CD8-positive, alpha-beta memory T cell (primary cell): ENCODE measurements at regions of chr6 and their contacts with region 1.

Region 1: DNA sequence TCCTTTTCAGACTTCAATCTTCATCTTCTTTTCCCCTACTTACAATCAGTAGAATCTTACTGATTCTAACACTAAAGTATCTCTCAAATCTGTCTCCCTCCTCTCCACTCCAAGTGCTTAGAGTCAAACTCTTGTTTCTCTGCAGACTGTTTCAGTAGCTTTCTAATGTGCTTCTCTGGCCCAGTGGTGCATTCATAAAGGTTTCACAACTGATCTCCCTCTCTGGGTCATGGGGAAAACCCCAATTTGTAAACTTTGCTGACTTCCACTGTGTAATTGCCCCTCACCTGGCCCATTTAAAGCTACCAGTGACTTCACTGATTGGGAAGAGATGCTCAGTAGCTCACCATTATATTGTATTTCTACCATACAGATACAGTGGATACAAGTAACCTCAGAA is 183.6 kb downstream of the FAXC start:
- DNase-seq: no peak
- H3K4me3 ChIP-seq: no peak overlapping the region
- H3K4me3 Mint-ChIP-seq: no peak overlapping the region
- H3K27ac ChIP-seq: no peak overlapping the region
- H3K27ac Mint-ChIP-seq: no peak overlapping the region
- H3K4me1 ChIP-seq: no peaks in the 10 kb centered on the region
- H3K4me1 Mint-ChIP-seq: no peaks in the 10 kb centered on the region
- H3K27me3 ChIP-seq: no peaks in the 10 kb centered on the region
- H3K27me3 Mint-ChIP-seq: peaks cover 5 to 15% of the 10 kb centered on the region in 2 donors

Region 2: GRCh38 chr6:99151634-99152344 is 14.0 kb before region 1 on chr6:
- CTCF ChIA-PET with region 1: interaction called, 10 read pairs
- POLR2A ChIA-PET with region 1: no interaction called
- DNase-seq: no peak
- H3K4me3 ChIP-seq: no peak overlapping the region
- H3K4me3 Mint-ChIP-seq: no peak overlapping the region
- H3K27ac ChIP-seq: no peak overlapping the region
- H3K27ac Mint-ChIP-seq: no peak overlapping the region
- H3K4me1 ChIP-seq: no peaks in the 10 kb centered on the region
- H3K4me1 Mint-ChIP-seq: no peaks in the 10 kb centered on the region
- H3K27me3 ChIP-seq: no peaks in the 10 kb centered on the region
- H3K27me3 Mint-ChIP-seq: peaks cover 0 to 7% of the 10 kb centered on the region in 2 donors